MCF 10A (cell line): ENCODE measurements at regions of chr17 and their contacts with region 1.

Region 1: DNA sequence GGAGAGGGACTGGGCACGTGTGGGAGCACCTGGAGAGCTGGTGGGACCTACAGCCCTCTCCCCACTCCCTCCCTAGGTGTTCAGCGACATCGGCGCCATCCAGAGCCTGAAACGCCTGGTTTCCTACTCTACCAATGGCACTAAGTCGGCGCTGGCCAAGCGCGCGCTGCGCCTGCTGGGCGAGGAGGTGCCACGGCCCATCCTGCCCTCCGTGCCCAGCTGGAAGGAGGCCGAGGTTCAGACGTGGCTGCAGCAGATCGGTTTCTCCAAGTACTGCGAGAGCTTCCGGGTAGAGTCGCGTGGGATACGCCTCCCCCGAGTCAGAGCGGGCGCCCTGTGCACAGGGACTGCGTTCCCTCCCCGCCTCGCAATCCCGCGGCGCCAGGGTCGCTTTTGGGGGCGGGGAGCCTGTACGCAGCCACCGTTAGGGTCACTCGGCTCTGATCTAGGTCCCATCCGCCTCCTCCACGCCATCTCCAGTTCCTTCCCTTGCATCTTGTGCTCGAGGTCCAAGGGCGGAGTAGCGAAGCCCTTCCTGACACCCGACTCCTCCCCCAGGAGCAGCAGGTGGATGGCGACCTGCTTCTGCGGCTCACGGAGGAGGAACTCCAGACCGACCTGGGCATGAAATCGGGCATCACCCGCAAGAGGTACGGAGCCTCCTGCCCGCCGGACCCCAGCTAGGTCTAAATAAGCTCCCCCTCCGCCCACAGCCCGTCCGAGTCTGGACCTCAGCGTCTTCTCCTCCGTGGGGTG is 13.0 kb downstream of the SARM1 start:
- DNase-seq: no peak
- H3K4me3 Mint-ChIP-seq: no peak overlapping the region
- H3K27ac Mint-ChIP-seq: no peak overlapping the region
- H3K4me1 Mint-ChIP-seq: peaks cover 13% of the 10 kb centered on the region
- H3K27me3 Mint-ChIP-seq: no peaks in the 10 kb centered on the region
- CTCF ChIP-seq: no peak

Region 2: DNA sequence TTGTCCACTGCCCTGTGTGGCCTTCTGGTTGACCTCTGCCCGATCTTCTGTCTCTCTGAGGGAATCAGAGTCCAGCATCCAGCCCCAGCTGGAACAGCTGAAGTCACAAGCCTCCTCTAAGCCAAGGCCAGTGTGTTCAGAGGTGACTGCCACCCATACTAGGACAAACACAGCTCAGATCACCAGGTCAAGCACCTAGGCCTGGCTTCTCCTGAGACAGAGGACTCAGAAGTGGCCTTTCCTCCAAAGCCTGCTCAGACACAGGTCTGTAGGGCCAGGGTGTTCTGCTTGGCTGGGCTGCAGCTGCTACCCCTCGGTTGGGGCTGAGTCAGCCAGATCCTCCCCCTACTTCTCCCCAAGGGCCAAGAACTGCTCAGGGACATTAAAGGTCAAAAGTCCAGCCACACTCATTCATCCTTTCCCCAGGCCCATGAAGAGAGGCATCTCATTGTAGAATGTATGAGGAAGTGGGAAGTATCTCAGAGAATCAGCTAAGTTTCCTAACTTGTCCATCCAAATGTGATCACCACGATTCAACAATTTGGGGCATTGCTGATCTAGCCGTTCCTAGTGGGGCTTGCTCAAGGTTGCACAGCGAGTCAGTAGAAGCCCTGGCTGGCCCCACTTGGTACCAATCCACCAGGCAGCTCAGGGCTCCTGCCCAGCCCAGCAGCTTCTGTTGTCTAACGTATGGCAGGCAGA is 14.0 kb after region 1 on chr17:
- CTCF ChIA-PET with region 1: interaction called, 6 read pairs
- POLR2A ChIA-PET with region 1: interaction called, 19 read pairs
- intact Hi-C with region 1: no loop called
- DNase-seq: no peak
- H3K4me3 Mint-ChIP-seq: no peak overlapping the region
- H3K27ac Mint-ChIP-seq: no peak overlapping the region
- H3K4me1 Mint-ChIP-seq: peaks cover 12% of the 10 kb centered on the region
- H3K27me3 Mint-ChIP-seq: no peaks in the 10 kb centered on the region
- CTCF ChIP-seq: no peak

Region 3: GRCh38 chr17:28405632-28406472 is 21.4 kb after region 1 on chr17 and contains the start of gene SLC46A1:
- CTCF ChIA-PET with region 1: interaction called, 3 read pairs
- POLR2A ChIA-PET with region 1: interaction called, 38 read pairs
- intact Hi-C with region 1: no loop called
- DNase-seq: peak; percentile 44
- H3K4me3 Mint-ChIP-seq: peak within 1 kb of the TSS; percentile 86
- H3K27ac Mint-ChIP-seq: no peak within 1 kb of the TSS
- H3K4me1 Mint-ChIP-seq: peaks cover 23% of the 10 kb centered on the region
- H3K27me3 Mint-ChIP-seq: no peaks in the 10 kb centered on the region
- CTCF ChIP-seq: no peak
- total RNA-seq, gene SLC46A1: 18.4 and 20.1 TPM in 2 replicates